Right ventricle myocardium superior (tissue), 1 donor: ENCODE measurements at regions of chr7 and their contacts with region 1.

Region 1: GRCh38 chr7:15326044-15326644 is 235.7 kb downstream of the AGMO start:
- DNase-seq: no peak
- ATAC-seq: no peak

Region 2: DNA sequence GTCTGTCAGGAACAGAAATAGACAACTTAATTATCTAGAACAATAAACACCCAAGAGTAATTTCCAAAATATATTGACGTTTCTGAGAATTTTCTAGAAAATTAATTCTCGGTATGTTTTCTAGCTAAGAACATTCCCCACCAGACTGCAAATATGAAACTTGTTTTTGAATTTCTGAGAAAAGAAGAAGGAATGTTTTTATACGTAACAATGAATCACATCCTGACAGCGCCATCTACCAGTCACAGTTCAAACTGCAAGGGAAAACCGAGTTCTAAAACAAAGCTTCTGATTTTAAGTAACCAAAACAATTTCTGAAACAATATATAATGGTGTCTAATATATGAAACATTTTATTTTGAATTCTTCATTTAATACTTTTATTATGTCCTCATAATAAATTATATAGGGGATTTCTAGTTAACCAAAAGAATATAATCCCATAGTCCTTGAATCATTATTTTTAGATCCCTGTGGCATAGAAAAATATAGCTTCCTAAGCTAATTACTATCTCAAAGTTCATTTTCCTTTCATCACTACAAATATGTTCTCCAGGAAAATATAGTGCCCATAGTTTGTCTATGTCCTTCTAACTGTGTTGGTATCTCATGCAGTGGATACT is 394.8 kb after region 1 on chr7:
- intact Hi-C with region 1: loop called (anchors 10 kb)
- DNase-seq: no peak
- ATAC-seq: no peak

Region 3: DNA sequence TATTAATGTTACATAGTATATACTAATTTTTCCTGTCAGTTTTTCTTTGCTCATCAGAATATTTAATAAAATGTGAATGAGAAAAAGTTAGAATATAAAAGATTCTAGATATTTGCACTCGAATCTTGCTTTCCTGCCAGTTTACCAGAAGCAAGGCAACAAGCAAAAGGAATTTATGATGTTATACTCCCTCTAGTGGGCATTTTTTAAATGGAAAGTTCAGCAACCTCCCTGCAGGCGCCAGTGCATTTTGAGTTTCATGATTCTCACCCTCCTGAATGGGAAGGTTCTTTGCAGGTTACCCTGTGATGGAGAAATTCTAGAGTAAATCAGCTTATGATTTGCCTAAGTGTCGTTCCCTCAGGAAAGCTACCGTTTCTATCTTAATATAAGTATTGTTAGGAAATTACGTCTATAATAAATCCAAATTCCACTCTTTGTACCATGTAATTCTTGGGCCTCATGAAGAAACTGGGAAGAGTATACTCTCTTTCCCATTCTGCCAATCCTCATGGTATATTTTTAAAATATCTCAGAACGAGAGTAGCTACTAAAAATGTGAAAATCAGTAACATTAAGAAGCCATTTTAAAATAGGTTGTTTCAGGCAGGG is 745.2 kb after region 1 on chr7:
- intact Hi-C with region 1: loop called (anchors 10 kb)
- DNase-seq: no peak
- ATAC-seq: peak; percentile 74